CD4-positive, alpha-beta memory T cell (primary cell): ENCODE measurements at regions of chr15 and their contacts with region 1.

Region 1: GRCh38 chr15:89358755-89359439 is 24.3 kb upstream of the POLG start:
- DNase-seq: peak; percentile 74 to 85 (median 80)
- H3K4me3 ChIP-seq: peak overlapping the region in 1 of 2 donors; percentile 61
- H3K4me3 Mint-ChIP-seq: peak overlapping the region; percentile 73 to 87 (median 84)
- H3K27ac ChIP-seq: no peak overlapping the region
- H3K27ac Mint-ChIP-seq: peak overlapping the region in 3 of 7 donors; percentile 47 to 60 (median 59)
- H3K4me1 ChIP-seq: peaks cover 17% of the 10 kb centered on the region
- H3K4me1 Mint-ChIP-seq: peaks cover 0 to 33% (median 11%) of the 10 kb centered on the region in 4 donors
- H3K27me3 ChIP-seq: peaks cover 58% of the 10 kb centered on the region
- H3K27me3 Mint-ChIP-seq: peaks cover 59 to 68% of the 10 kb centered on the region in 2 donors

Region 2: DNA sequence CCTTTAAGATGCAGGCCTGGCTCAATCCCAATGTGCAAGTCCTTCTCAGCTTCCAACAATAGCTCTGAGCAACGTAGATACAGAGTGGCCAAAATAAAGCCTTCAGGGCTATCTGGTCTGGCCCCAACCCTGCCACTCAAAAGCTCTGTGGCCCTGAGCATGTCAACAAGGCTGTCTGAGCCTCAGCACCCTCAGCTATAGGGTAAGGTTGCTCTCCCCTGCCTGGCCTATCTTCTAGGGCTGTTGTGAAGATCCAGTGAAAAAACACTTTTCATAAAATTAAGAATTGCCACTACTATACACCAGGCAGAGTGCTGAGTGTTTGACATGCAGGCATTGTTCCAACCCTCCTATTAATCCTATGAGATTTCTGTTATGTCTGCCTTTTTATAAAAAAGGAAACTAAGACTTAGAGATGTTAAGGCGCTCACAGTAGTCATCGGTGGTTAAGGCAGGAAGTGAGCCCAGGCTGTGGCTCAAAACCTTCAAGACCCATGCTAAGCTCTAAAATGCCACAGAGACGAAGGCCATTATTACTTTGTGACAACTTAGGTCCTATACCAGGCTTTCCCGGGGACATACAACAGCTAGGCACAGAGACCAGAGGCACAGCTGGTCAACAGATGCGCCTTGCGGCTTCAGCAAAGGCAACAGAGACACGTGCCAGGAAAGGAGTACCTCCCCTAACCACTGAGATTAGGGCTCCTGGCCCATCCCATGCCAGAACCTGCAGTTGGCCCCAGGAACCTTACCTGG is 29.4 kb before region 1 on chr15:
- CTCF ChIA-PET with region 1: interaction called, 73 read pairs
- POLR2A ChIA-PET with region 1: interaction called, 12 read pairs
- intact Hi-C with region 1: loop called (anchors 2 kb)
- DNase-seq: peak; percentile 20 to 54 (median 32)
- H3K4me3 ChIP-seq: no peak overlapping the region
- H3K4me3 Mint-ChIP-seq: peak overlapping the region; percentile 17 to 81 (median 71)
- H3K27ac ChIP-seq: peak overlapping the region; percentile 39
- H3K27ac Mint-ChIP-seq: peak overlapping the region; percentile 48 to 86 (median 81)
- H3K4me1 ChIP-seq: peaks cover 60% of the 10 kb centered on the region
- H3K4me1 Mint-ChIP-seq: peaks cover 39 to 65% (median 47%) of the 10 kb centered on the region in 4 donors
- H3K27me3 ChIP-seq: no peaks in the 10 kb centered on the region
- H3K27me3 Mint-ChIP-seq: no peaks in the 10 kb centered on the region

Region 3: GRCh38 chr15:89346516-89347231 is 12.2 kb before region 1 on chr15:
- CTCF ChIA-PET with region 1: interaction called, 24 read pairs
- POLR2A ChIA-PET with region 1: no interaction called
- intact Hi-C with region 1: no loop called
- DNase-seq: no peak
- H3K4me3 ChIP-seq: no peak overlapping the region
- H3K4me3 Mint-ChIP-seq: no peak overlapping the region
- H3K27ac ChIP-seq: no peak overlapping the region
- H3K27ac Mint-ChIP-seq: no peak overlapping the region
- H3K4me1 ChIP-seq: no peaks in the 10 kb centered on the region
- H3K4me1 Mint-ChIP-seq: peaks cover 0 to 9% (median 4%) of the 10 kb centered on the region in 4 donors
- H3K27me3 ChIP-seq: no peaks in the 10 kb centered on the region
- H3K27me3 Mint-ChIP-seq: peaks cover 6 to 9% of the 10 kb centered on the region in 2 donors

Region 4: DNA sequence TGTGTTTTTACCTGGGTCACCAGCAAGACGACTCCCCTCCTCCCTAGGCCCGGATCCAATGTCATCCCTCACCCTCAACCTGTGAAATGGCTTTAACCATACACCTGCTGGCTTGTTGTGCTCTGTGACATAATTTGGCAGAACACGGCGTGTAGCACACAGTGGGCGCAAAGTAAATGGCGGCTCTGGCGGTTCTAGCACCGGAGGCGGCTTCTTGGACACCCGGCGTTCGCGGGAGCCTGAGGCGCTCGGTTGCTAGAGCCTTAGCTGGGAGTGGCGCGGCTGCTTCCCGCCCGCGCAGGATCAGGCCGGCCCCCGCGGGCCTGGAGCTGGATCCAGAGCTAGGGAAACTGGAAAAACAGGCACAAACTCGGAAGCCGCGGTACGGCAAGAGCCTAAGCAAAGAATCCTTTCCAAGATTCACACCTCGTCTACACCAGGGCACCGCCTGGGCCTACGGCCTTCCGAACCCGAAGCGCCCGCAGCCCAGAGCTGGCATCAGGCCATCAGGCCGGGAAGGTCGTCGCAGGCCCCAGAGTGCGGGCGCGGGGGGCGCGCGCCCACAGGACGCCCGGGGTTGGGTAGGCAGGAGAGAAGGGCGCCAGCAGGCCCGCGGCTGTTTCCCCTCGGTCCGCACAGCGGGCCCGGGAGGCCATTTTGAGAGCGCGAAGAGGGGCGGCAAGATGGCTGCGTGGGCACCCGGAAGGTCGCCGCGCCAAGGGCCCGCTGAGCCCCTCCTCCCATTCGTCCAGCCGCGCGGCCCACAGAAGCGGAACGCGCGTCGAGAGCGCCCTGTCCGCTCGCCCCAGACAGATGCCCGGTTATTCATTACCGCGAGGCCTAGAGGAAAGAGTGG is 19.6 kb after region 1 on chr15:
- CTCF ChIA-PET with region 1: interaction called, 11 read pairs
- POLR2A ChIA-PET with region 1: interaction called, 5 read pairs
- intact Hi-C with region 1: no loop called
- DNase-seq: no peak
- H3K4me3 ChIP-seq: no peak overlapping the region
- H3K4me3 Mint-ChIP-seq: peak overlapping the region; percentile 39 to 83 (median 64)
- H3K27ac ChIP-seq: no peak overlapping the region
- H3K27ac Mint-ChIP-seq: peak overlapping the region in 2 of 7 donors; percentile 41 to 66
- H3K4me1 ChIP-seq: no peaks in the 10 kb centered on the region
- H3K4me1 Mint-ChIP-seq: peaks cover 0 to 21% (median 8%) of the 10 kb centered on the region in 4 donors
- H3K27me3 ChIP-seq: peaks cover 39% of the 10 kb centered on the region
- H3K27me3 Mint-ChIP-seq: peaks cover 60 to 68% of the 10 kb centered on the region in 2 donors

Region 5: DNA sequence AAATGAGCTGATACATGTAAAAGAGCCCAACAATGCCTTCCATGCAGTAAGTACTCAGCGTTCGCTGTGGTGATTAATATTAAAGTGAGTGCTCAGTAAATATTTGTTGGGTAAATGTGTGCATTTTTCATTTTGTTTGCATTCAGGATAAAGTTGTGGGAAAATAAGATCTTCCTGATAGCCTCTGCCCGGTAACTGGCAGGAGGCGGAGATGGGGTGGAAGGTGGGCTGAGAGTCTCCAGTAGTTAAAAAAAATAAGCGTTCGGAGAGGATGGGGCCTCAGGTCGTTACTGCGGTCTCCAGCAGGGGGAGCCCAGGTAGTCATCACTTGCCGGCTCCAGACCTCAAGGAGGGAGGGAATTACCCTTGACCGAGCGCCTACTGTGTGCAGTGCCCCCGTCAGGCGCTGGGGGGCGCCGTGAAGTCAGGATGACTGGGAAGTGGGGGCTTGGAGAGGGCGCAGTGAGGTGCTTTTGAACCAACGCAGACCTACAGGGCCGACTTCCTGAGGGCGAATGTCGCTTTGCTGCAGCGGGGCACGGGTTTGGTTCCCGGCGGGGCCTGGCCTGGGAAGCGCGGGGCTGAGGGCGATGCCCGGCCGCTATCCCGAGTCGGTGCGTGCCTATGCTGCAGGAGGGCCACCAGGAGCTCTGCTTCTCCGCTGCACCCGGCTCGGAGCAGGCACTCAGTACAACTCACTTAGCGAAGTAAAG is 57.4 kb after region 1 on chr15:
- CTCF ChIA-PET with region 1: interaction called, 14 read pairs
- POLR2A ChIA-PET with region 1: no interaction called
- intact Hi-C with region 1: loop called (anchors 5 kb)
- DNase-seq: peak; percentile 48 to 71 (median 53)
- H3K4me3 ChIP-seq: no peak overlapping the region
- H3K4me3 Mint-ChIP-seq: peak overlapping the region in 6 of 8 donors; percentile 11 to 52 (median 30)
- H3K27ac ChIP-seq: no peak overlapping the region
- H3K27ac Mint-ChIP-seq: peak overlapping the region in 1 of 7 donors; percentile 78
- H3K4me1 ChIP-seq: peaks cover 7% of the 10 kb centered on the region
- H3K4me1 Mint-ChIP-seq: peaks cover 8 to 16% (median 11%) of the 10 kb centered on the region in 4 donors
- H3K27me3 ChIP-seq: peaks cover 52% of the 10 kb centered on the region
- H3K27me3 Mint-ChIP-seq: peaks cover 64 to 70% of the 10 kb centered on the region in 2 donors

Region 6: DNA sequence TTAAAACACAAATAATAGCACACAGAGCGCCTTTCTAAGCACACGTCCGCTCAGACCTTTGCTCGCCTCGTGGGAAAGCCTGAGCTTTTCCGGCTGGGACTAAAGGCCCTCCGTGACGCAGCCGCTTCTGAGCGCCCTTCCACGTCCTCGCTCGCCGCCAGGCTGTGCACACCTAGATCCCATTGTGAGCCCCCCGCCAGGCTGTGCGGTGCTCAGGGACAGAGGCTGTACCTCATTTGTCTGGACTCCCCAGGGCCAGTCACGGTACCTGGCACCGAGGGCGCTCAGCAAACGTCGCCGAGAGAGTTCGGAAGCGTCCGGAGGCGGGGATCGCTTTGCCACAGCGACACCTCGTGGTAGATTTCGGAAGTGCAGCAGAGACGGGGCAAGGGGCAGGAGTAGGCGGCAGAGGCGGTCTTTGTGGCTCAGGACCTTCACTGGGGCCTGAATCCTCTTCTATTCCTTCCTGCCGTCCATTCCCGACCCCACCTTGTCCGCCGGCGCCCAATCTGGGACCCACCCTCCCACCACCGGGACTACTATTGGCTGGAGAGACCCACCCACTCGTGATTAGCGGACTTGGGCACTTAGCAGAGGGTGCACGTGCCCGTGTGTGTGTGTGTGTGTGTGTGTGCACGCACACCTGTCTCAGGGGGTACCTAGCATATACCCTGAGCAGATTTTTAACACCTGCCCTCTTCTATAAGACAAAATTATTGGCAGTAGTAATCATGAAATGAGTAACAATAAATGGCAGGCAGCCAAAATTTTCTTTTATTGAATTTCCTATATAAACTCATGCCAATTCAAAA is 71.8 kb after region 1 on chr15:
- CTCF ChIA-PET with region 1: interaction called, 133 read pairs
- POLR2A ChIA-PET with region 1: no interaction called
- intact Hi-C with region 1: loop called (anchors 1 kb)
- DNase-seq: peak; percentile 73 to 84 (median 77)
- H3K4me3 ChIP-seq: peak overlapping the region; percentile 31 to 51
- H3K4me3 Mint-ChIP-seq: peak overlapping the region; percentile 74 to 89 (median 82)
- H3K27ac ChIP-seq: no peak overlapping the region
- H3K27ac Mint-ChIP-seq: peak overlapping the region in 1 of 7 donors; percentile 53
- H3K4me1 ChIP-seq: peaks cover 5% of the 10 kb centered on the region
- H3K4me1 Mint-ChIP-seq: peaks cover 4 to 7% (median 6%) of the 10 kb centered on the region in 4 donors
- H3K27me3 ChIP-seq: no peaks in the 10 kb centered on the region
- H3K27me3 Mint-ChIP-seq: peaks cover 6 to 23% of the 10 kb centered on the region in 2 donors